Ascending aorta (tissue), 2 donors: ENCODE measurements at regions of chr16 and their contacts with region 1.

Region 1: GRCh38 chr16:83826146-83826913 is 18.6 kb downstream of the HSBP1 start:
- DNase-seq: peak; percentile 33 to 88
- H3K4me3 ChIP-seq: no peak overlapping the region
- H3K27ac ChIP-seq: no peak overlapping the region
- H3K4me1 ChIP-seq: no peaks in the 10 kb centered on the region
- H3K27me3 ChIP-seq: no peaks in the 10 kb centered on the region
- CTCF ChIP-seq: peak; percentile 81 to 93 (median 91)

Region 2: GRCh38 chr16:83878838-83879237 is 52.5 kb after region 1 on chr16:
- intact Hi-C with region 1: loop called (anchors 1 kb)
- DNase-seq: no peak
- H3K4me3 ChIP-seq: no peak overlapping the region
- H3K27ac ChIP-seq: no peak overlapping the region
- H3K4me1 ChIP-seq: no peaks in the 10 kb centered on the region
- H3K27me3 ChIP-seq: no peaks in the 10 kb centered on the region
- CTCF ChIP-seq: peak in 2 of 3 experiments; percentile 29 to 52

Region 3: GRCh38 chr16:83898463-83899271 is 72.3 kb after region 1 on chr16 and contains the start of gene MLYCD:
- intact Hi-C with region 1: loop called (anchors 5 kb)
- DNase-seq: peak; percentile 50 to 90
- H3K4me3 ChIP-seq: peak within 1 kb of the TSS; percentile 95 to 97
- H3K27ac ChIP-seq: peak within 1 kb of the TSS; percentile 94 to 98
- H3K4me1 ChIP-seq: peaks cover 3 to 13% of the 10 kb centered on the region in 2 donors
- H3K27me3 ChIP-seq: no peaks in the 10 kb centered on the region
- CTCF ChIP-seq: peak in 1 of 3 experiments; percentile 4
- total RNA-seq, gene MLYCD: 13.4 TPM

Region 4: GRCh38 chr16:84062734-84063640 is 236.7 kb after region 1 on chr16:
- intact Hi-C with region 1: loop called (anchors 5 kb)
- DNase-seq: peak; percentile 26 to 86
- H3K4me3 ChIP-seq: no peak overlapping the region
- H3K27ac ChIP-seq: no peak overlapping the region
- H3K4me1 ChIP-seq: no peaks in the 10 kb centered on the region
- H3K27me3 ChIP-seq: no peaks in the 10 kb centered on the region
- CTCF ChIP-seq: peak; percentile 64 to 80 (median 80)